Activated CD4-positive, alpha-beta memory T cell treated with anti-CD3 and anti-CD28 coated beads for 36 hours (primary cell): ENCODE measurements at regions of chr2 and their contacts with region 1.

Region 1: GRCh38 chr2:85635636-85636035 is 19.6 kb downstream of the USP39 start:
- DNase-seq: no peak
- H3K4me3 Mint-ChIP-seq: no peak overlapping the region
- H3K27ac Mint-ChIP-seq: no peak overlapping the region
- H3K4me1 Mint-ChIP-seq: peaks cover 5% of the 10 kb centered on the region
- H3K27me3 Mint-ChIP-seq: no peaks in the 10 kb centered on the region

Region 2: DNA sequence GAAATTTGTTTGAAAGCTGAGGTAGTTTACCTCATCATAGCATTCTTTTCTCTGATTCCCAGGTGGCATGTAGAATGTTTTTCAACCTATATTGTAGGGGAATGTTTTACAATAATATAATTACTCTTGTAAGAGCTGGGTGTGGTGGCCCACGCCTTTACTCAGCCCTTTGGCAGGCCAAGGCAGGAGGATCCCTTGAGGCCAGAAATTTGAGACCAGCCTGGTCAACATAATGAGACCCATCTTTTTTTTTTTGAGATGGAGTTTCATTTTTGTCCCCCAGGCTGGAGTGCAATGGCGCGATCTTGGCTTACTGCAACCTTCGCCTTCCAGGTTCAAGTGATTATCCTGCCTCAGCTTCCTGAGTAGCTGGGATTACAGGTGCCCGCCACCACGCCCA is 16.0 kb before region 1 on chr2:
- CTCF ChIA-PET with region 1: interaction called, 82 read pairs
- POLR2A ChIA-PET with region 1: interaction called, 3 read pairs
- intact Hi-C with region 1: no loop called
- DNase-seq: no peak
- H3K4me3 Mint-ChIP-seq: no peak overlapping the region
- H3K27ac Mint-ChIP-seq: no peak overlapping the region
- H3K4me1 Mint-ChIP-seq: peaks cover 23% of the 10 kb centered on the region
- H3K27me3 Mint-ChIP-seq: no peaks in the 10 kb centered on the region

Region 3: GRCh38 chr2:85648619-85649018 is 13.0 kb after region 1 on chr2:
- CTCF ChIA-PET with region 1: interaction called, 35 read pairs
- POLR2A ChIA-PET with region 1: no interaction called
- intact Hi-C with region 1: no loop called
- DNase-seq: no peak
- H3K4me3 Mint-ChIP-seq: no peak overlapping the region
- H3K27ac Mint-ChIP-seq: no peak overlapping the region
- H3K4me1 Mint-ChIP-seq: peaks cover 2% of the 10 kb centered on the region
- H3K27me3 Mint-ChIP-seq: no peaks in the 10 kb centered on the region

Region 4: GRCh38 chr2:85659324-85659981 is 23.8 kb after region 1 on chr2:
- CTCF ChIA-PET with region 1: interaction called, 25 read pairs
- POLR2A ChIA-PET with region 1: interaction called, 7 read pairs
- intact Hi-C with region 1: no loop called
- DNase-seq: no peak
- H3K4me3 Mint-ChIP-seq: no peak overlapping the region
- H3K27ac Mint-ChIP-seq: no peak overlapping the region
- H3K4me1 Mint-ChIP-seq: no peaks in the 10 kb centered on the region
- H3K27me3 Mint-ChIP-seq: no peaks in the 10 kb centered on the region